ENCODE measurements at regions of chr11 and their contacts with region 1.

Region 1: DNA sequence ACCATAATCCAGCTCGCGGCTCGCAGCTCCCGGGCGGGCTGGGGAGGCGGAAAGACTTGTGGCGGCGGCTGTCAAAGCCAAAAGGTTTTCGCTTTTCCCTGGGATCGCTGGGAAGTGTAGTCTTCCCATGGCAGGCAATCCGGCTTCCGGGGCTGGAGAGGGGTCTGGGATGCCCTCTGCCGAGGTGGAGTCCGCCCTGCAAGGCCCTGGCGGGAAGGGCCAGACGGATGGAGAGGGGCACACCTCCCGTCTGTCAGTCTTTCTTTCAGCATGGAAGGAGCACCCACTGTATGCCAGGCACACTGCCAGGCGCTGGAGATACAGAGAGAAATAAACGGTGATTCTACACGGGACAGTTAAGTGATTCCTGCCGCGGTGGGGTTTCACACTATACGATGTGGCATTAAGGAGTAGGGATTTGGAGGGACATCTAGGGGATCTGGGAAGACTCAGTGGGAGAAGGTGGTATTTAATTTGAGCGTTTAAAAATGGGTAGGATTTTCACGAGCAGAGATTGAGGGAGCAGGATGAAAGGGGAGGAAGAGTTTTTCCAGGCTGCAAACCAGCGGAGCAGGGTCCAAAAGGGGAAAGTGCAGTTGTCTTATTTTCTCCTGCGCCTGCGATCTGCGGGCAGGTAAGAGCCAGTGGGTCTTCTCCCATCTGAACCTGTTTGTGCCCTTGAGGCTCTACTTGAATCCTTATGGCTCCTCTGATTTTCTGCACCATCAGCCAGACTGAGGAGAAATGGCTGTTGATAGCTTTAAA is at the start of gene BACE1:
- DNase-seq: peak; percentile 71
- H3K4me3 ChIP-seq: peak within 1 kb of the TSS; percentile 79 to 86
- H3K27ac ChIP-seq: peak within 1 kb of the TSS; percentile 5 to 66
- H3K4me1 ChIP-seq: peaks cover 10% of the 10 kb centered on the region
- H3K27me3 ChIP-seq: no peaks in the 10 kb centered on the region
- CTCF ChIP-seq: peak in 2 of 4 experiments; percentile 25 to 36
- POLR2A ChIP-seq: no peak
- total RNA-seq, gene BACE1: 12.4 to 28.4 TPM

Region 2: DNA sequence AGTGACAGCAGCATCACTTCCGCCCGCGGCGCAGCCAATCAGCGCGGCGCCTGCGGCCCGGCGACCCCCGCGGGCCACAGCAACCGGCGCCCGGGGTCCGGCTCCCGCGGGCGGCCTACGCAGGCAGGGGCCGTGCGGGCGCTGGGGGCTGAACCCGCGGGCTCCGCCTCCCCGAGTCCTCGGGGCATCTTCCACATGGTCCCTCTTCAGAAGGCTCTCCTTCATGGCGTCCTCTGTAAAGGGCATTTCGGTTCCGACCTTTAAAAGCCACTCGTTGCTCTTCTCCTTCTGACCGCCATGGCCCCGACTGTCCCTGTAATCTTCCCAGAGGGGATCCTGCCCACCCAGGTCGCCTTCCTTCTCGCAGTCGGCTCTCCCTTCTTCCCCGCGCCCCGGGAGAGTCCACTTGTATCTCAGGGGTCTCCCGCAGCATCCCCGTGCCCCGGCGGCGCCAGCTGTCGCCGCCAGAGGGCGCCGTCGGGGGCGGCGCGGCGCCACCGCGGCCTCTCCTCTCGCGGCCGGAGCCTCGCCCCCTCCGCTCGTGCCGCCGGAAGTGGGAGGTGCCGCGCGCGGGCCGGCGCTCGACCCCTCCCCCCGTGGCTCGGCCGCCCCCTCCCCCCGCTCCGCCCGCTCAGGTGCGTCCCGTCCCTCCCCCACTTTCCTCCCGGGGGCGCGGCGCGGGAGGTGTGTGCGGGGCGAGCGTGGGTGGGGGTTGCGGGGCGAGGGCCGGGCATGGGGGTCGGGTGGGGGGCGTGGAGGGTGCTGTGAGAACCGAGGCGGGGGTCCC is 84.1 kb before region 1 on chr11 and contains the start of gene RNF214:
- intact Hi-C with region 1: loop called (anchors 2 kb)
- DNase-seq: peak; percentile 67
- H3K4me3 ChIP-seq: peak within 1 kb of the TSS; percentile 69 to 80
- H3K27ac ChIP-seq: peak within 1 kb of the TSS; percentile 88 to 91
- H3K4me1 ChIP-seq: no peaks in the 10 kb centered on the region
- H3K27me3 ChIP-seq: no peaks in the 10 kb centered on the region
- CTCF ChIP-seq: peak; percentile 91 to 99 (median 98)
- POLR2A ChIP-seq: peak; percentile 5
- total RNA-seq, gene RNF214: 9.4 to 24.8 TPM

Region 3: GRCh38 chr11:117387992-117388755 is 71.8 kb after region 1 on chr11:
- intact Hi-C with region 1: no loop called
- DNase-seq: no peak
- H3K4me3 ChIP-seq: no peak overlapping the region
- H3K27ac ChIP-seq: no peak overlapping the region
- H3K4me1 ChIP-seq: no peaks in the 10 kb centered on the region
- H3K27me3 ChIP-seq: no peaks in the 10 kb centered on the region
- CTCF ChIP-seq: no peak
- POLR2A ChIP-seq: no peak

Region 4: GRCh38 chr11:118975771-118976709 is 1659.7 kb after region 1 on chr11:
- intact Hi-C with region 1: no loop called
- DNase-seq: no peak
- H3K4me3 ChIP-seq: no peak overlapping the region
- H3K27ac ChIP-seq: no peak overlapping the region
- H3K4me1 ChIP-seq: no peaks in the 10 kb centered on the region
- H3K27me3 ChIP-seq: no peaks in the 10 kb centered on the region
- CTCF ChIP-seq: no peak
- POLR2A ChIP-seq: no peak

Measured in prostate gland (tissue), 2 donors.